Calu3 (cell line): ENCODE measurements at regions of chr1 and their contacts with region 1.

Region 1: DNA sequence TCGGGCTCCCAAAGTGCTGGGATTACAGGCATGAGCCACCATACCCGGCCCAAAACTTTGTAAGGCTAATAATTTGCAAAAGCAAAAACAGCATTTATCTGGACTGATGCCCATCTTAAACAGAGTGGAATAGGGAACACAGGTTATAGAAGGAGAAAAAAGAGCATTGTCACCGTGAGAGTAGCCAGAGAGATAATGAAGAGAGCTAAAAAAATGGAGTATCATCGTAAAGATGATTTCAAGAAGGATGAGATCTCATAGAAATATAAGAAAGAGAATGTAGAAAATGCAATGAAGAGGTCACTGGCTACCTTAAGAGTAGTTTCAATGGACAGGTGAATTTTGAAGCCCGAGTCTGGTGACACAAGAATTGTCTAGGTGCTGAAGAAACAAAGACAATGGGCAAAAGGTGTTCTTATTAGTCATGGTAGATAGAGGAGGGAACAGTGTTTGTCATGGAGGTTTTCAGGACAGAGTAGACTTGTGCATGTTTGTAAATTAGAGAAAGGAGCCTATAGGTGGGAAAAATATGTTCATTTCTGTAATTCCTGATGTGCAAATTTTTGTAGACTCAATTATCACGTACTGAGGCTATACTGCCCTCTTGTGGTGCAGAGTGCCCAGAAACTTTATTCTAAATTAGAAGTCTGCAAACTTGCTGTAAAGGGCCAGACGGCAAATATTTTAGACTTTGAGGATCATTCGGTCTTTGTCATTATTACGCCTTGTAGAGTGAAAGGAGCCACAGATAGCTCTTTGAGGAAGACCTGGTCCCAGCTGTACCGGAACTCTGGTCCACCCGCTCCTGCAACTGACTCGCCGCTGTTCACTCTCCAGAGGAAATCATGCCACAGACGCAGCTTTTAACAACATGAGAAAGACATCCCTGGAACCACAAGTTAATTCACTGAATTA is 8.1 kb upstream of the TMEM183A start:
- DNase-seq: peak; percentile 71
- H3K4me3 Mint-ChIP-seq: no peak overlapping the region
- H3K27ac Mint-ChIP-seq: no peak overlapping the region
- H3K4me1 Mint-ChIP-seq: peaks cover 18% of the 10 kb centered on the region
- H3K27me3 Mint-ChIP-seq: peaks cover 60% of the 10 kb centered on the region
- CTCF ChIP-seq: peak; percentile 77

Region 2: GRCh38 chr1:202085682-202086404 is 913.2 kb before region 1 on chr1:
- CTCF ChIA-PET with region 1: no interaction called
- intact Hi-C with region 1: no loop called
- DNase-seq: peak; percentile 73
- H3K4me3 Mint-ChIP-seq: peak overlapping the region; percentile 67
- H3K27ac Mint-ChIP-seq: peak overlapping the region; percentile 99
- H3K4me1 Mint-ChIP-seq: peaks cover 61% of the 10 kb centered on the region
- H3K27me3 Mint-ChIP-seq: no peaks in the 10 kb centered on the region
- CTCF ChIP-seq: no peak

Region 3: GRCh38 chr1:202750758-202751157 is 248.3 kb before region 1 on chr1:
- CTCF ChIA-PET with region 1: no interaction called
- intact Hi-C with region 1: loop called (anchors 5 kb)
- DNase-seq: no peak
- H3K4me3 Mint-ChIP-seq: no peak overlapping the region
- H3K27ac Mint-ChIP-seq: no peak overlapping the region
- H3K4me1 Mint-ChIP-seq: no peaks in the 10 kb centered on the region
- H3K27me3 Mint-ChIP-seq: no peaks in the 10 kb centered on the region
- CTCF ChIP-seq: no peak

Region 4: DNA sequence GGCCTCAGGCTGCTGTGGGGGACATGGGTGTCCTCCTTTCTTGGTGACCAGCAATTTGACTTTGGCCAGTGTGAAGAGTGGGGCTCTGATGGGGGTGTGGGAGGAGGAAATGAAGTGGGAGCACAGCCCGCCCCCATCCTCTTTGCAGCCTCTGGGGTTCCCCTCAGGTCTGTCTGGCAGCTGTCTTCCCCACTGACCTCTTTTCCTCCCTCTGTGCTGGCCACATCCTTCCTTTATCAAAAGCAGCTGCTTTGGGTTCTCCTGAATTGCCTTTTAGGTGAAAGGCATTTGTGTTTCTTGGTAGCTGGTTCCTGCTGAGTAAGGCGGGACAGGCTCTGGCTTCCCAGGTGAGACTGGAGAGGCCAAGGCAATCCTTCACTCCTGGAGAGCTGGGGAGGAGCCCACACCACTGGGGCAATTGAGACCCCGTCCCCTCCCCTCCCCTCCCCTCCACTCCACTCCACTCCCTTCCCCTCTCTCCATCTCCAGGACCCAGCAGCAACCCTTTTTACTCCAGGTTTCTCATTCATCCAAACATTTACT is 163.5 kb before region 1 on chr1:
- CTCF ChIA-PET with region 1: no interaction called
- intact Hi-C with region 1: no loop called
- DNase-seq: no peak
- H3K4me3 Mint-ChIP-seq: no peak overlapping the region
- H3K27ac Mint-ChIP-seq: no peak overlapping the region
- H3K4me1 Mint-ChIP-seq: no peaks in the 10 kb centered on the region
- H3K27me3 Mint-ChIP-seq: peaks cover 42% of the 10 kb centered on the region
- CTCF ChIP-seq: no peak

Region 5: GRCh38 chr1:202938287-202938925 is 60.7 kb before region 1 on chr1:
- CTCF ChIA-PET with region 1: no interaction called
- intact Hi-C with region 1: no loop called
- DNase-seq: no peak
- H3K4me3 Mint-ChIP-seq: no peak overlapping the region
- H3K27ac Mint-ChIP-seq: no peak overlapping the region
- H3K4me1 Mint-ChIP-seq: no peaks in the 10 kb centered on the region
- H3K27me3 Mint-ChIP-seq: peaks cover 17% of the 10 kb centered on the region
- CTCF ChIP-seq: no peak

Region 6: GRCh38 chr1:202968840-202969295 is 30.2 kb before region 1 on chr1:
- CTCF ChIA-PET with region 1: no interaction called
- intact Hi-C with region 1: loop called (anchors 1 kb)
- DNase-seq: peak; percentile 68
- H3K4me3 Mint-ChIP-seq: no peak overlapping the region
- H3K27ac Mint-ChIP-seq: no peak overlapping the region
- H3K4me1 Mint-ChIP-seq: peaks cover 14% of the 10 kb centered on the region
- H3K27me3 Mint-ChIP-seq: peaks cover 28% of the 10 kb centered on the region
- CTCF ChIP-seq: peak; percentile 63

Region 7: DNA sequence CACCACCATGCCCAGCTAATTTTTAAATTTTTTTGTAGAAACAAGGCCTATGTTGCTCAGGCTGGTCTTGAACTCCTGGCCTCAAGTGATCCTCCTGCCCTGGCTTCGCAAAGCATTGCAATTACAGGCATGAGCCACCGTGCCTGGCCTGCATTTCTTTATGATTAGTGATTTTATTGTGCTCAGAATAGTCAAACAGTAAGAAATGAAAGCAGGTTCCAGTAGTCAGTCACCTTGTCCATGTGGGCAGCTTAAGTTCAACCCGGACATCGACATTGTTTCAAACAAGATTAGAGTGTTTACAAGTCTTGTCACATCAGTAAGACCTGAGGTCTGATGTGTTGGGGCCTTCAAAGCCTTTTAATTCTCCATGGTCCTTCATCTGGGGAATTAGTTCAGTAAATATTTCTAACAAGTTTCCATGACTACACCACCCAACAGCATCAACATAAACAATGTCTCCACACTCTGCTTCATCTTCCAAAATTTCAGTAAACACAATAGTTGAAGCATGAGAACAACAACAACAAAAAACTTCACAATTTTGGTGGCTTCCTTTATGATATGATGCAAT is 113.3 kb after region 1 on chr1:
- CTCF ChIA-PET with region 1: no interaction called
- intact Hi-C with region 1: no loop called
- DNase-seq: no peak
- H3K4me3 Mint-ChIP-seq: no peak overlapping the region
- H3K27ac Mint-ChIP-seq: no peak overlapping the region
- H3K4me1 Mint-ChIP-seq: no peaks in the 10 kb centered on the region
- H3K27me3 Mint-ChIP-seq: peaks cover 38% of the 10 kb centered on the region
- CTCF ChIP-seq: no peak